Activated CD8-positive, alpha-beta T cell treated with anti-CD3 and anti-CD28 coated beads for 36 hours (primary cell): ENCODE measurements at regions of chr15 and their contacts with region 1.

Region 1: DNA sequence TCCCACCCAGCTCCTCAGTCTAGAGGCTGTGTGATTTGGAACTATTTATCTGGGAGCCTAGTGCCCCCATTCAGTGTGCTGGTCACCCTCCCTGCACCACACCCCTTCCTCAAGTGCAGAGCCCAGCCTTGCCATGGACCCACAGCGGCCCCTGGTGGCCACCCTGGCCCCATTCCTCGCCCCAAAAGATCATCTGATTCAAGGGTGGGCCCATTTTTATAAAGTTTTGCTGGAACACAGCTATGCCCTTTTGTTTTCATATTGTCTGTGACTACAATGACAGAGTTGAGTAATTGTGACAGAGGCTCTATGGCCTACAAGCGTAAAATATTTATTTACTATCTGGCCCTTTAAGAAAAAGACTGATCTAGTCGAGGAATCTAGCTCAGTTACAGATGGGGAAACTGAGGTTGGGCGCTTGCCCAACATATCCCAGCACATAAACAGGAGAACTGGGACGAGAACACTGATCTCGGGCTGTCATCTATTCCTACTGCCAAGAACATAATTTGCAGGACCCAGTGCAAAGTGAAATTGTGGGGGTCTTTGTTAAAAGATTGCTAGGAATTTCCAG is 1.8 kb downstream of the FES start:
- DNase-seq: peak; percentile 85
- ATAC-seq: peak; percentile 69
- H3K4me3 Mint-ChIP-seq: no peak overlapping the region
- H3K27ac Mint-ChIP-seq: peak overlapping the region; percentile 55
- H3K4me1 Mint-ChIP-seq: peaks cover 7% of the 10 kb centered on the region
- H3K27me3 Mint-ChIP-seq: peaks cover 7% of the 10 kb centered on the region
- CTCF ChIP-seq: peak; percentile 99

Region 2: GRCh38 chr15:90716976-90717821 is 168.9 kb before region 1 on chr15 and contains the start of gene BLM:
- CTCF ChIA-PET with region 1: interaction called, 15 read pairs
- POLR2A ChIA-PET with region 1: interaction called, 4 read pairs
- intact Hi-C with region 1: no loop called
- DNase-seq: peak; percentile 96
- ATAC-seq: peak; percentile 100
- H3K4me3 Mint-ChIP-seq: peak within 1 kb of the TSS; percentile 84
- H3K27ac Mint-ChIP-seq: peak within 1 kb of the TSS; percentile 96
- H3K4me1 Mint-ChIP-seq: peaks cover 18% of the 10 kb centered on the region
- H3K27me3 Mint-ChIP-seq: no peaks in the 10 kb centered on the region
- CTCF ChIP-seq: no peak
- total RNA-seq, gene BLM: 45.2 to 53.6 TPM

Region 3: DNA sequence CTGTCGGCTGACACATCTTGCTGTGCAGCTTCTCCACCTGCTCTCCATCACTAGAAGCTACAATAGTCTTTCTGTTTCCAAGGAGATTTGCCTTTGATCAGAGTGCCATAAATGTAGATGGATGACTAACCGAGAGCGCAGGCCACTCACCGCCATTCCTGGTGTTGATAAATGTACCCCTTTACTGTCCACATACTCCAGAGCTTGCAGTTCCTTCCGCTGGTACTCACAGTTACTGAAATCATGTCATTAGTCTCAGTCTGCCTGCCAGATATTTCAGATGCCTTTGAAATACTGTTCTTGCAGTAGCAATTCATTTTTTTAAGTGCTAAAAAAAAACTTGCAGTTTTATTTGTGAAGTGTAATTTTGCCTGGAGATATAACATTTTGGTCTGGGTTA is 96.7 kb before region 1 on chr15:
- CTCF ChIA-PET with region 1: interaction called, 12 read pairs
- POLR2A ChIA-PET with region 1: no interaction called
- intact Hi-C with region 1: no loop called
- DNase-seq: no peak
- ATAC-seq: no peak
- H3K4me3 Mint-ChIP-seq: no peak overlapping the region
- H3K27ac Mint-ChIP-seq: no peak overlapping the region
- H3K4me1 Mint-ChIP-seq: no peaks in the 10 kb centered on the region
- H3K27me3 Mint-ChIP-seq: no peaks in the 10 kb centered on the region
- CTCF ChIP-seq: no peak

Region 4: GRCh38 chr15:90818251-90819210 is 67.6 kb before region 1 on chr15:
- CTCF ChIA-PET with region 1: interaction called, 28 read pairs
- POLR2A ChIA-PET with region 1: interaction called, 7 read pairs
- intact Hi-C with region 1: no loop called
- DNase-seq: peak; percentile 61
- ATAC-seq: peak; percentile 35
- H3K4me3 Mint-ChIP-seq: peak overlapping the region; percentile 5
- H3K27ac Mint-ChIP-seq: peak overlapping the region; percentile 78
- H3K4me1 Mint-ChIP-seq: peaks cover 53% of the 10 kb centered on the region
- H3K27me3 Mint-ChIP-seq: no peaks in the 10 kb centered on the region
- CTCF ChIP-seq: peak; percentile 40

Region 5: GRCh38 chr15:90859234-90860131 is 26.6 kb before region 1 on chr15:
- CTCF ChIA-PET with region 1: interaction called, 15 read pairs
- POLR2A ChIA-PET with region 1: no interaction called
- intact Hi-C with region 1: no loop called
- DNase-seq: peak; percentile 1
- ATAC-seq: no peak
- H3K4me3 Mint-ChIP-seq: no peak overlapping the region
- H3K27ac Mint-ChIP-seq: peak overlapping the region; percentile 40
- H3K4me1 Mint-ChIP-seq: peaks cover 47% of the 10 kb centered on the region
- H3K27me3 Mint-ChIP-seq: no peaks in the 10 kb centered on the region
- CTCF ChIP-seq: no peak

Region 6: DNA sequence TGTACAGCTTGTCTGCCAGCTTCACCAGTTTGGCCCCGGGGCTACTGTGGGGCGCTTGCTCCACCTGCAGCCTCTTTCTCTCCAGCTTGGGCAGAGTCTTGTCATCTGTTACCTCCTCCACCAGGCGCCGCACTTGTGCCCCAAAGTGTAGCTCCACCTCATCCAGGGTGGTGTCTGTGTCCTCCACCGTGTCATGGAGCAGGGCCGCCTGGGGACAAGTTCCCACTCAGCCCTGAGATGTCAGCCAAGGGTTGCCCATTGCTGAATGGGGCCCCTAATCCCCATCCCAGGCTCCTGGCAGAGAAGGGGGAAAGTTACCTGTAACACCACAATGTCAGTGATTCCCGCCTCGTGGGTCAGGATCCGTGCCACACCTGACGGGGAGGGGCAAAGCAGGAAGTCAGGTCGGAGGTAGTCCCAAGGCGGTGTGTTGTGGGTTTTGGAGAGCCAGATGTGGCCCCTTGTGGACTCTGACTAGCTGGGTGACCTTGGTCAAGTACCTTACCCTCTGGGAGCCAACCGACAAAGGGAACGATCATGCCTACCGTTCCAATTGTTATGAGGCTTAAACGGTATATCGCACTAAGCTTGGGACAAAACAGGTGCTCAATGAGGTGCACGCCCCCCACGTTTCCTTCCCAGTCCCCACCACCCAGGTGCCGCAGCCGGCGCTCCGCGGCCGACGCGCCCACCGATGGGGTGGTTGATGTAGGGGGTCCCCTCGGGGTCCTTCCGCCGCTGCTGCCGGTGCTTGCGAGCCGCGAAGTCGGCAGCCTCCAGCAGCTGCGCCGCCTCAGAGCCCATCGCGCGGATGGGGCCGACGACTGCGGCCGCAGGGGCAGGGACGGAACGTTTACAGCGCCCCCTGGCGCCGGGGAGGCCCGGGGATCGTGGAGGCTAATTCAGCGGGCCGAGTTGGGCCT is 45.9 kb after region 1 on chr15 and contains the start of gene HDDC3:
- CTCF ChIA-PET with region 1: interaction called, 40 read pairs
- POLR2A ChIA-PET with region 1: interaction called, 5 read pairs
- intact Hi-C with region 1: no loop called
- DNase-seq: peak; percentile 94
- ATAC-seq: peak; percentile 60
- H3K4me3 Mint-ChIP-seq: peak within 1 kb of the TSS; percentile 99
- H3K27ac Mint-ChIP-seq: peak within 1 kb of the TSS; percentile 99
- H3K4me1 Mint-ChIP-seq: peaks cover 36% of the 10 kb centered on the region
- H3K27me3 Mint-ChIP-seq: no peaks in the 10 kb centered on the region
- CTCF ChIP-seq: peak; percentile 96
- total RNA-seq, gene HDDC3: 34.2 to 35.6 TPM

Region 7: DNA sequence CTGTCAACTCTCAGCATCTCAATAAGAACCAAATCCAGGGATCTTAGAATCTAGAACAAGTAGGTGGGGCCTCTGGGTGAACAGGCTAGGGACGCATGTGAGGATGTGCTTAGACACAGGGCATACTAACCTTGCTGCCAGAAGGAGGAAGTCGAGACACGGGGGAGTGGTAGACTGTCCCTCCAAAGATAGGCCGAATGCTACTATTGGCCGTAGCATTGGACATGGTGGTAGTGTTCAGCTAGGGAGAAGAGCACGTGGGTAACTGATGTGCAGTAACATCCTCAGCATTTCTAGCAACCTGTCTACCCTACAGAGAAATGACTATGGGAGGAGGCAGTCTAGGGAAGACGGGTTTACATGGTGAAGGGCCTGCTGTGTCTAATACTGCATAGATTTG is 84.1 kb after region 1 on chr15:
- CTCF ChIA-PET with region 1: no interaction called
- POLR2A ChIA-PET with region 1: no interaction called
- intact Hi-C with region 1: no loop called
- DNase-seq: no peak
- ATAC-seq: no peak
- H3K4me3 Mint-ChIP-seq: no peak overlapping the region
- H3K27ac Mint-ChIP-seq: no peak overlapping the region
- H3K4me1 Mint-ChIP-seq: no peaks in the 10 kb centered on the region
- H3K27me3 Mint-ChIP-seq: no peaks in the 10 kb centered on the region
- CTCF ChIP-seq: no peak